ENCODE measurements at regions of chr1 and their contacts with region 1.

Region 1: DNA sequence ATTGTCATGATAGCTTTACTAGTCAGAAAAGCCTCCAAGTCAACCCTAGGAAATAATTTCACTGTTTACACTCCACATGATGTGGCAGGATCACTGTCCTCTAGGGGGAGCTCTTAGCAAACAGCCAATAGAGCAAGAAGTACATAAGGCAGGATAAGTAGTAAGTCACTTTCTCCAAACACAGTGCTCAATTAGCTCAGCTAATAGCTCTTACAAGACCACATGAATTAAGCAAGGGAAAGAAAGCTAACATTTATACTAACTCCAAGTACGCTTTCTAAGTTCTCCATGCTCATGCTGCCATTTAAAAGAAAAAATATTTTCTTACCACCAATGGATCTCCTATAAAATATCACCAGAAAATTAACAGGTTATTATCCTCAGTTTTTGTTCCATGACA is 66.9 kb upstream of the LRIF1 start:
- DNase-seq: no peak
- ATAC-seq: no peak
- H3K4me3 ChIP-seq: no peak overlapping the region
- H3K27ac ChIP-seq: no peak overlapping the region
- H3K4me1 ChIP-seq: no peaks in the 10 kb centered on the region
- H3K27me3 ChIP-seq: no peaks in the 10 kb centered on the region
- CTCF ChIP-seq: peak in 1 of 5 experiments; percentile 51
- POLR2A ChIP-seq: no peak

Region 2: DNA sequence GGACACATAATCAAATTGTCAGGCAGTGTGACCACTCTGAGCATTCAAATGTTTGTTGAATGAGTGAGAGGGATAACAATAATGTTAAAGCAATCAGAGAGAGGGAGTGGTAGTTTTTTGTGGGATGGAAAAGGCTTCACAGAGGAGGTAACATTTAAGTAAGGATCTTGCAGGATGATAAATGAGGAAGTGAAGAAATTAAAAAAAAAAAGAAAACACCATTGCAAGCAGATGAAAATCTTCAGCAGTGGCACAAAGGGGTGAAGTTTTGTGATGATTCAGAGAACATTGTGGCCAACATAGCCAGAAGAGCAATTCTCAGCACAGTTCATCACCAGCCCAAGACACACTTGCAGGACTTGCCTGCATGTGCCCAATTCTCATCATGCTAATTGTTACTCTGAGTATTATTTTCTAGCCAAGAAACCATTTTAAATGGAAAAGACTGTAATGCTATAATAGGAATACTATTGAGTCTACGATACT is 361.9 kb after region 1 on chr1:
- in situ Hi-C with region 1: no loop called
- intact Hi-C with region 1: loop called (anchors 5 kb)
- DNase-seq: no peak
- ATAC-seq: no peak
- H3K4me3 ChIP-seq: no peak overlapping the region
- H3K27ac ChIP-seq: no peak overlapping the region
- H3K4me1 ChIP-seq: no peaks in the 10 kb centered on the region
- H3K27me3 ChIP-seq: no peaks in the 10 kb centered on the region
- CTCF ChIP-seq: no peak
- POLR2A ChIP-seq: no peak

Measured in gastrocnemius medialis (tissue), 4 donors.